ENCODE measurements at regions of chr2 and their contacts with region 1.

Region 1: DNA sequence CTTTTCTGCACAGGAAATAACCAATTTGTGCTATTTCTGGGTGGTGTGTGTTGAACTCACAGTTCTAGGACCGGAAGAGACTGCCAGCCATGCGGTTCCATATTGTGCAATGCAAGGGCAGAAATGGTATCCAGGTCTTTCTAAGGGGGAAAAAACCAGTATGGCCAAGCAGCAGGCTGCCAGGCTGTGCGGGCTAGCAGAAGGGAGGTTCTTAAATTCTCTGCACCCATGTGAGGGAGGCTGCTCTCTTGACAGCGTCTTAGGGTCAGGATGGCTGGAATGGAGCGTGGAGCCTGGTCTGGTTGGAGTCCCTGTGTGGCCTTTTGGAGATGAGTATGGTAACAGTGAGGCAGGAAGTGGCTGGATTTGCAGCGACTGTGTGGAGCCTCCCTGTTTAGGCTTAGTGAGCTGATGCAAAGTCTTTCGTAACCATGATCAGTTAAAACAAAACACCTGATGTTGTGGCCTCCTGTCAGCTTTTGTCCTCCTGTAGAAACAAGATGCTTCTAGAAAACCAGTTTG is 52.6 kb downstream of the NCK2 start:
- DNase-seq: peak in 6 of 9 donors; percentile 37 to 58 (median 48)
- ATAC-seq: peak; percentile 33
- H3K4me3 ChIP-seq: peak overlapping the region; percentile 34
- H3K4me3 Mint-ChIP-seq: peak overlapping the region; percentile 70 to 92 (median 78)
- H3K27ac ChIP-seq: peak overlapping the region; percentile 74
- H3K27ac Mint-ChIP-seq: peak overlapping the region; percentile 92 to 100 (median 99)
- H3K4me1 ChIP-seq: peaks cover 92 to 93% of the 10 kb centered on the region in 2 donors
- H3K4me1 Mint-ChIP-seq: peaks cover 74 to 100% (median 94%) of the 10 kb centered on the region in 7 donors
- H3K27me3 ChIP-seq: no peaks in the 10 kb centered on the region
- H3K27me3 Mint-ChIP-seq: no peaks in the 10 kb centered on the region

Region 2: DNA sequence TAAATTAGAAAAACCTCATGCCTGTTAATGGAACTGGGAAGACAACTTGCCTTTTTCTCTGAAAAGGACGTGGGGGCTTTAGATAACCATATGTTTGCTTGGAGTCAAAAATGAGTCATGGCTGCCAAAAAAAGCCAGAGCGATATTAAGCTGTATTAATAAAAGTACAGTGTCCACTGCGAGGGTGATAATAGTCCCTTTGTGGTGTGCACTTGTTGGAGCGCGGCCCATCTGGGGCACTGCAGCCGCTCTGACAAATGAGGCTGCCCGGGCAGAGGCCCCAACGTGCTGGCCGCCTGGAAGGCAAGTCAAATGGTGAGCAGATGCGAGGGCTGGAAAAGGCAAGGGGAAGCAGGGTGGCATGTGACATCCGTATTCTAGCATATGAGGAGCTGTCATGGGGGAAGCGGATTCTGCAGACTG is 156.0 kb before region 1 on chr2:
- CTCF ChIA-PET with region 1: no interaction called
- POLR2A ChIA-PET with region 1: no interaction called
- intact Hi-C with region 1: no loop called
- DNase-seq: no peak
- ATAC-seq: no peak
- H3K4me3 ChIP-seq: no peak overlapping the region
- H3K4me3 Mint-ChIP-seq: no peak overlapping the region
- H3K27ac ChIP-seq: no peak overlapping the region
- H3K27ac Mint-ChIP-seq: no peak overlapping the region
- H3K4me1 ChIP-seq: no peaks in the 10 kb centered on the region
- H3K4me1 Mint-ChIP-seq: peaks cover 0 to 7% (median 0%) of the 10 kb centered on the region in 7 donors
- H3K27me3 ChIP-seq: no peaks in the 10 kb centered on the region
- H3K27me3 Mint-ChIP-seq: peaks cover 0 to 21% (median 0%) of the 10 kb centered on the region in 5 donors

Region 3: GRCh38 chr2:105737980-105738657 is 59.2 kb before region 1 on chr2:
- CTCF ChIA-PET with region 1: interaction called, 3 read pairs
- POLR2A ChIA-PET with region 1: interaction called, 6 read pairs
- intact Hi-C with region 1: loop called in 1 of 2 experiments (anchors 2 kb)
- DNase-seq: peak in 6 of 9 donors; percentile 56 to 77 (median 70)
- ATAC-seq: peak; percentile 88
- H3K4me3 ChIP-seq: peak overlapping the region; percentile 37
- H3K4me3 Mint-ChIP-seq: peak overlapping the region; percentile 54 to 84 (median 80)
- H3K27ac ChIP-seq: peak overlapping the region; percentile 74
- H3K27ac Mint-ChIP-seq: peak overlapping the region; percentile 90 to 99 (median 96)
- H3K4me1 ChIP-seq: peaks cover 40 to 41% of the 10 kb centered on the region in 2 donors
- H3K4me1 Mint-ChIP-seq: peaks cover 47 to 88% (median 83%) of the 10 kb centered on the region in 7 donors
- H3K27me3 ChIP-seq: no peaks in the 10 kb centered on the region
- H3K27me3 Mint-ChIP-seq: no peaks in the 10 kb centered on the region

Region 4: GRCh38 chr2:105744091-105744908 is 53.1 kb before region 1 on chr2:
- CTCF ChIA-PET with region 1: interaction called, 3 read pairs
- POLR2A ChIA-PET with region 1: interaction called, 51 read pairs
- intact Hi-C with region 1: loop called (anchors 1 to 2 kb)
- DNase-seq: peak; percentile 57 to 79 (median 69)
- ATAC-seq: peak; percentile 87
- H3K4me3 ChIP-seq: peak overlapping the region; percentile 24
- H3K4me3 Mint-ChIP-seq: peak overlapping the region; percentile 76 to 96 (median 90)
- H3K27ac ChIP-seq: peak overlapping the region; percentile 80
- H3K27ac Mint-ChIP-seq: peak overlapping the region; percentile 90 to 96 (median 95)
- H3K4me1 ChIP-seq: peaks cover 48 to 54% of the 10 kb centered on the region in 2 donors
- H3K4me1 Mint-ChIP-seq: peaks cover 49 to 82% (median 77%) of the 10 kb centered on the region in 7 donors
- H3K27me3 ChIP-seq: no peaks in the 10 kb centered on the region
- H3K27me3 Mint-ChIP-seq: no peaks in the 10 kb centered on the region

Region 5: DNA sequence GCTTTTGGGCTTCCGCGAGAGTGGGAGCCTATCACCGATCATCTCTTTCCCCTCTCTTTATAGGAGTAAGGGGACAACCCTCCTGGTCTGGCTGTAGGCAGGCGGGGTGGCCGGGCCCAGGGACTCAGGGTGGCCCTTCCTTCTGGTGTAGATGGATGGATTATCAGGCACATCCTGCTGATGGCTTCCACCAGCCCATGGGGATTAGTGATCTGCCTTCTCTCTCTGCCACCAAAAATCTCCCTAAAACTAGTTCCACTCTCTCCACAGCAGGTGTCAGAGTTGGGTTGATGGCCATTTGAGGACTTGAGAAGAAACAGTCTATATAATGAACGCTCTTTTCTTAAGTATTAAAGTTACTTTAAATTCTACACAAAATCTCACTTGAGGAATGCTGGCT is 15.2 kb before region 1 on chr2:
- CTCF ChIA-PET with region 1: interaction called, 5 read pairs
- POLR2A ChIA-PET with region 1: interaction called, 18 read pairs
- intact Hi-C with region 1: loop called (anchors 2 kb)
- DNase-seq: peak in 1 of 9 donors; percentile 44
- ATAC-seq: peak; percentile 42
- H3K4me3 ChIP-seq: peak overlapping the region; percentile 52
- H3K4me3 Mint-ChIP-seq: peak overlapping the region; percentile 19 to 88 (median 78)
- H3K27ac ChIP-seq: peak overlapping the region; percentile 54
- H3K27ac Mint-ChIP-seq: peak overlapping the region; percentile 79 to 98 (median 91)
- H3K4me1 ChIP-seq: peaks cover 97 to 99% of the 10 kb centered on the region in 2 donors
- H3K4me1 Mint-ChIP-seq: peaks cover 70 to 97% (median 93%) of the 10 kb centered on the region in 7 donors
- H3K27me3 ChIP-seq: no peaks in the 10 kb centered on the region
- H3K27me3 Mint-ChIP-seq: no peaks in the 10 kb centered on the region

Region 6: DNA sequence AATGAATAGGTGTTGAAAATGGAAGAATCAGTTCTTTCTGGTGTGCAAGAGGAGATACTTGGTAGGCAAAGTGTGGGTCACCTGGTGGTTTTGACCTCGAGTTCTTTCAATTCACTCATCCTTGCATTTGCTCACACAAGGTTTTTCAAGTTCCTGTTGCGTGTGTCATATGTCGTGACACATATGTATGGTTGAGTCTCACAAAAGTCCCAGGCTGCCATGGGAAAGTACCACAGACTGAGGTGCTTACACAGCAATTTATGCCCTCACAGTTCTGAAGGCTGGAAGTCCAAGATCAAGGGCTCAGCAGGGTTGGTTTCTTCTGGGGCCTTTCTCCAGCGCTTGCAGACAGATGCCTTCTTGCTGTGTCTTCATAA is 11.7 kb after region 1 on chr2:
- CTCF ChIA-PET with region 1: interaction called, 3 read pairs
- POLR2A ChIA-PET with region 1: interaction called, 12 read pairs
- intact Hi-C with region 1: loop called (anchors 1 to 2 kb)
- DNase-seq: peak in 1 of 9 donors; percentile 37
- ATAC-seq: peak; percentile 58
- H3K4me3 ChIP-seq: peak overlapping the region; percentile 2
- H3K4me3 Mint-ChIP-seq: peak overlapping the region in 8 of 10 donors; percentile 18 to 88 (median 58)
- H3K27ac ChIP-seq: peak overlapping the region; percentile 46
- H3K27ac Mint-ChIP-seq: peak overlapping the region; percentile 62 to 89 (median 82)
- H3K4me1 ChIP-seq: peaks cover 77 to 83% of the 10 kb centered on the region in 2 donors
- H3K4me1 Mint-ChIP-seq: peaks cover 57 to 98% (median 94%) of the 10 kb centered on the region in 7 donors
- H3K27me3 ChIP-seq: no peaks in the 10 kb centered on the region
- H3K27me3 Mint-ChIP-seq: no peaks in the 10 kb centered on the region

Region 7: DNA sequence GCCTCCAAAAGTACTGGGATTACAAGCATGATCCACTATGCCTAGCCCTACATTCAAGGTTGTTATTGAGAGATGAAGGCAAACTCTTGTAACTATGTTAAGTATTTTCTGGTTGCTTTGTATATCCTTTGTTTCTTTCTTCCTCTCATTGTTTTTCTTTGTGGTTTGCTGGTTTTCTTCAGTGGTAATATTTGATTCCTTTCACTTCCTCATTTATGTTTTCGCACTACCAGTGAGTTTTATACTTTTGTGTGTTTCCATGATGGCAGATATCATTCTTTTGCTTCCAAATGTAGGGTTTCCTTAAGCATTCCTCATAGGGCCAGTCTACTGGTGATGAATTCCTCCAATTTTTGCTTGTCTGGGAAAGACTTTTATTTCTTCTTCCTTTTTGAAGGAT is 37.6 kb after region 1 on chr2:
- CTCF ChIA-PET with region 1: no interaction called
- POLR2A ChIA-PET with region 1: interaction called, 3 read pairs
- intact Hi-C with region 1: loop called (anchors 1 to 2 kb)
- DNase-seq: peak in 6 of 9 donors; percentile 56 to 80 (median 70)
- ATAC-seq: peak; percentile 59
- H3K4me3 ChIP-seq: no peak overlapping the region
- H3K4me3 Mint-ChIP-seq: peak overlapping the region; percentile 0 to 54 (median 30)
- H3K27ac ChIP-seq: peak overlapping the region; percentile 61
- H3K27ac Mint-ChIP-seq: peak overlapping the region; percentile 40 to 95 (median 78)
- H3K4me1 ChIP-seq: peaks cover 43 to 49% of the 10 kb centered on the region in 2 donors
- H3K4me1 Mint-ChIP-seq: peaks cover 45 to 96% (median 87%) of the 10 kb centered on the region in 7 donors
- H3K27me3 ChIP-seq: no peaks in the 10 kb centered on the region
- H3K27me3 Mint-ChIP-seq: no peaks in the 10 kb centered on the region

Region 8: GRCh38 chr2:105929516-105929915 is 132.2 kb after region 1 on chr2:
- CTCF ChIA-PET with region 1: no interaction called
- POLR2A ChIA-PET with region 1: interaction called, 5 read pairs
- intact Hi-C with region 1: loop called (anchors 2 to 5 kb)
- DNase-seq: peak in 8 of 9 donors; percentile 31 to 79 (median 70)
- ATAC-seq: peak; percentile 72
- H3K4me3 ChIP-seq: no peak overlapping the region
- H3K4me3 Mint-ChIP-seq: peak overlapping the region in 9 of 10 donors; percentile 51 to 85 (median 64)
- H3K27ac ChIP-seq: peak overlapping the region; percentile 55
- H3K27ac Mint-ChIP-seq: peak overlapping the region; percentile 63 to 97 (median 90)
- H3K4me1 ChIP-seq: peaks cover 61 to 83% of the 10 kb centered on the region in 2 donors
- H3K4me1 Mint-ChIP-seq: peaks cover 48 to 76% (median 71%) of the 10 kb centered on the region in 7 donors
- H3K27me3 ChIP-seq: no peaks in the 10 kb centered on the region
- H3K27me3 Mint-ChIP-seq: no peaks in the 10 kb centered on the region

Region 9: DNA sequence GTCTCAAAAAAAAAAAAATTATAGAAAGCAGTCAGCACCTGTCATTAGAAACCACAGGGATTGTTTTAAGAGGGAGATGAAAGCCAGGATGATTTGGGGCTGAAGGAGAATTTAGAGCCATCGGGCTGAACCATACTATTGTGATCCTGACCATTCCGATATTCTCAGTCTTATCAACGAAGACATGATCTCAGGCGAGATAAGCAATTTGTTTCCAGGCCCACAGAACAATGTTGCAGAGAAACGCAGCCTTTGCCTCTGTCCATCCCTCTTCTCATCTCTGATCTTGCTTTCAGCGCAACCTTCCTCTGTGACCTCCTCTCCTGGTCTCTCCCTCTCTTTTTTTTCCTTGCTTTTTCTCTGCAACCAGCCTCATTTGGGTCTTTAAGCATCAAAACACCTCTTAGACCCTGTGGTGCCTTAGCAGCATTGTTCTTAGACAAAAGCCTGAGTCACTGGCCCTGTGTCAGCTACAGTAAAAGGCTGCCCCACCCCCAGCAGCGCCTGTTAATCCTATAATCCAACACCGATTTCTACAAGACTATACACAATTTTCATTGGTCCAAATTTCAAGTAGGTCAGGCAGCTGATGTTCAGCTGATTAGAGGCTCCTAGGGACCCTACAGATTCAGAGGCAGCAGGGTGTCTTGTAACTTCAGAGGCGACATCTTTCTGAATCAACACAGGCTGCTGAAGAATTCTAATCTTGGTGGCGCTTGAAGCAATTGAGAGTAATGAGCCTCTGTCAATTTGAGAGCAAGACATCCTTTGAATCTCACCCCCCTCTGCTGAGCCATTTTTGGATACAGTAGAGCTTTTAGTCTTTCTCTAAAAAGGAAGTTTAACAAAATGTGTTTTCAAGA is 153.4 kb after region 1 on chr2:
- CTCF ChIA-PET with region 1: no interaction called
- POLR2A ChIA-PET with region 1: no interaction called
- intact Hi-C with region 1: no loop called
- DNase-seq: peak in 1 of 9 donors; percentile 24
- ATAC-seq: no peak
- H3K4me3 ChIP-seq: no peak overlapping the region
- H3K4me3 Mint-ChIP-seq: peak overlapping the region in 9 of 10 donors; percentile 1 to 70 (median 39)
- H3K27ac ChIP-seq: no peak overlapping the region
- H3K27ac Mint-ChIP-seq: peak overlapping the region in 7 of 9 donors; percentile 26 to 87 (median 56)
- H3K4me1 ChIP-seq: peaks cover 5 to 46% of the 10 kb centered on the region in 2 donors
- H3K4me1 Mint-ChIP-seq: peaks cover 30 to 80% (median 71%) of the 10 kb centered on the region in 7 donors
- H3K27me3 ChIP-seq: no peaks in the 10 kb centered on the region
- H3K27me3 Mint-ChIP-seq: peaks cover 0 to 8% (median 0%) of the 10 kb centered on the region in 5 donors